ENCODE measurements at regions of chr4 and their contacts with region 1.

Region 1: DNA sequence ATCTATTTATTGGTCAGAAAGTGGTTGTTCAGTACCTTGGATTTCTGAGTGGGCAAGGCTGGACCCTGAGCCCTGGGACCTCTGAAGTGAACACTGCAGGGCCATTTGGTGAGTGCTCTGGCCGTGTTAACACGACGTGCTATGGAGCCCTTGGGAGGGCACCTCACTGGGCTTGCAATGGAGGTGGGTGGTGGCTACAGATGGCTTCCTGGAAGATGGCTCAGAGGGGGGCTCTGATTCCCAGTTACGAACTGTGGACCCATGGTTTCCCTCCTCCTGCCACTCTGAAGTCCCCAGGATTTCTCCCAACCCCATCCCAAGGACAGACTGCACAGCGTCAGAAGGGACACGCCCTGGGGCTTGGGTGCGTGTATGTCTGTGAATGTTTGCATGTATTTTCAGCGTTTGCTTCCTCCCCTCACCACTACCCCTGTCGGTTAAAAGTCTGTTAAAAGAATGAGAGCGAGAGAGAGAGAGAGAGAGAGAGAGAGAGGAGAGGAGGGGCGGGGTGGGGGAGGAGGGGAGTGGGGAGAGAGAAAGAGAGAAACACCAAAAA is 3.7 kb upstream of the RHOH start:
- DNase-seq: peak; percentile 50
- ATAC-seq: peak; percentile 13
- H3K4me3 Mint-ChIP-seq: peak overlapping the region; percentile 99
- H3K27ac Mint-ChIP-seq: peak overlapping the region; percentile 99
- H3K4me1 Mint-ChIP-seq: peaks cover 57% of the 10 kb centered on the region
- H3K27me3 Mint-ChIP-seq: no peaks in the 10 kb centered on the region
- CTCF ChIP-seq: no peak

Region 2: GRCh38 chr4:40149960-40150385 is 43.1 kb before region 1 on chr4:
- CTCF ChIA-PET with region 1: interaction called, 3 read pairs
- POLR2A ChIA-PET with region 1: interaction called, 24 read pairs
- intact Hi-C with region 1: loop called (anchors 5 kb)
- DNase-seq: peak; percentile 83
- ATAC-seq: peak; percentile 98
- H3K4me3 Mint-ChIP-seq: no peak overlapping the region
- H3K27ac Mint-ChIP-seq: peak overlapping the region; percentile 68
- H3K4me1 Mint-ChIP-seq: peaks cover 41% of the 10 kb centered on the region
- H3K27me3 Mint-ChIP-seq: no peaks in the 10 kb centered on the region
- CTCF ChIP-seq: peak; percentile 95

Measured in activated CD8-positive, alpha-beta T cell treated with anti-CD3 and anti-CD28 coated beads for 36 hours (primary cell).